ENCODE measurements at regions of chr13 and their contacts with region 1.

Region 1: GRCh38 chr13:44470638-44471562 is 97.3 kb downstream of the SERP2 start:
- DNase-seq: no peak
- ATAC-seq: no peak
- H3K4me3 Mint-ChIP-seq: no peak overlapping the region
- H3K27ac Mint-ChIP-seq: no peak overlapping the region
- H3K4me1 Mint-ChIP-seq: no peaks in the 10 kb centered on the region
- H3K27me3 Mint-ChIP-seq: no peaks in the 10 kb centered on the region
- CTCF ChIP-seq: peak; percentile 87

Region 2: GRCh38 chr13:44050450-44051063 is 420.3 kb before region 1 on chr13:
- CTCF ChIA-PET with region 1: no interaction called
- POLR2A ChIA-PET with region 1: no interaction called
- intact Hi-C with region 1: loop called (anchors 1 kb)
- DNase-seq: no peak
- ATAC-seq: no peak
- H3K4me3 Mint-ChIP-seq: no peak overlapping the region
- H3K27ac Mint-ChIP-seq: no peak overlapping the region
- H3K4me1 Mint-ChIP-seq: no peaks in the 10 kb centered on the region
- H3K27me3 Mint-ChIP-seq: peaks cover 33% of the 10 kb centered on the region
- CTCF ChIP-seq: no peak

Measured in activated B cell treated with CpG ODN at 0.5 μM for 24 hours (primary cell).